Activated naive CD4-positive, alpha-beta T cell treated with anti-CD3 and anti-CD28 coated beads for 36 hours (primary cell): ENCODE measurements at regions of chr18 and their contacts with region 1.

Region 1: GRCh38 chr18:62584241-62585120 is 61.7 kb downstream of the ZCCHC2 start:
- DNase-seq: peak; percentile 93
- H3K4me3 Mint-ChIP-seq: peak overlapping the region; percentile 2
- H3K27ac Mint-ChIP-seq: peak overlapping the region; percentile 92
- H3K4me1 Mint-ChIP-seq: peaks cover 42% of the 10 kb centered on the region
- H3K27me3 Mint-ChIP-seq: no peaks in the 10 kb centered on the region

Region 2: GRCh38 chr18:61949946-61950345 is 634.5 kb before region 1 on chr18:
- CTCF ChIA-PET with region 1: no interaction called
- intact Hi-C with region 1: loop called (anchors 5 kb)
- DNase-seq: no peak
- H3K4me3 Mint-ChIP-seq: no peak overlapping the region
- H3K27ac Mint-ChIP-seq: no peak overlapping the region
- H3K4me1 Mint-ChIP-seq: peaks cover 49% of the 10 kb centered on the region
- H3K27me3 Mint-ChIP-seq: peaks cover 7% of the 10 kb centered on the region

Region 3: DNA sequence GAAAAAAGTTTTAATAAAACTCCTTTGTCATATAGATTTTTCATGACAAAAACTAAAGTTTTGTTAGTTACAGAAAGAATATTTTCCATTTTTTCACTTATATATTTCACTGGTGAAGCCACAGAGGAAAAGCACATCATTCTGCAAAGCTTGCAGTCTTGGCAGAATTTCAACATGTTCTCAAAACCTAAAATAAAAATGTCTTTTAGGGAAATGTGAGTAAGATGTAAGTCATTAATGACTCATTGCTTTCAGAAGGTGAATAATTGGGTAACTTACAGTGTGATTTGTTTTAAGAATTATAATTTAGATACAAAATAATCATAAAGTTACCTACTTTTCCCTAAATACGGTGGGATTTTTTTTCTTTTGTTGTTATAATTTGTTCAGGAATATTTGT is 302.8 kb before region 1 on chr18:
- CTCF ChIA-PET with region 1: interaction called, 7 read pairs
- intact Hi-C with region 1: loop called (anchors 1 kb)
- DNase-seq: no peak
- H3K4me3 Mint-ChIP-seq: no peak overlapping the region
- H3K27ac Mint-ChIP-seq: no peak overlapping the region
- H3K4me1 Mint-ChIP-seq: peaks cover 39% of the 10 kb centered on the region
- H3K27me3 Mint-ChIP-seq: no peaks in the 10 kb centered on the region

Region 4: GRCh38 chr18:62418258-62418657 is 166.2 kb before region 1 on chr18:
- CTCF ChIA-PET with region 1: interaction called, 10 read pairs
- intact Hi-C with region 1: loop called (anchors 1 kb)
- DNase-seq: peak; percentile 67
- H3K4me3 Mint-ChIP-seq: no peak overlapping the region
- H3K27ac Mint-ChIP-seq: peak overlapping the region; percentile 62
- H3K4me1 Mint-ChIP-seq: peaks cover 44% of the 10 kb centered on the region
- H3K27me3 Mint-ChIP-seq: peaks cover 4% of the 10 kb centered on the region

Region 5: DNA sequence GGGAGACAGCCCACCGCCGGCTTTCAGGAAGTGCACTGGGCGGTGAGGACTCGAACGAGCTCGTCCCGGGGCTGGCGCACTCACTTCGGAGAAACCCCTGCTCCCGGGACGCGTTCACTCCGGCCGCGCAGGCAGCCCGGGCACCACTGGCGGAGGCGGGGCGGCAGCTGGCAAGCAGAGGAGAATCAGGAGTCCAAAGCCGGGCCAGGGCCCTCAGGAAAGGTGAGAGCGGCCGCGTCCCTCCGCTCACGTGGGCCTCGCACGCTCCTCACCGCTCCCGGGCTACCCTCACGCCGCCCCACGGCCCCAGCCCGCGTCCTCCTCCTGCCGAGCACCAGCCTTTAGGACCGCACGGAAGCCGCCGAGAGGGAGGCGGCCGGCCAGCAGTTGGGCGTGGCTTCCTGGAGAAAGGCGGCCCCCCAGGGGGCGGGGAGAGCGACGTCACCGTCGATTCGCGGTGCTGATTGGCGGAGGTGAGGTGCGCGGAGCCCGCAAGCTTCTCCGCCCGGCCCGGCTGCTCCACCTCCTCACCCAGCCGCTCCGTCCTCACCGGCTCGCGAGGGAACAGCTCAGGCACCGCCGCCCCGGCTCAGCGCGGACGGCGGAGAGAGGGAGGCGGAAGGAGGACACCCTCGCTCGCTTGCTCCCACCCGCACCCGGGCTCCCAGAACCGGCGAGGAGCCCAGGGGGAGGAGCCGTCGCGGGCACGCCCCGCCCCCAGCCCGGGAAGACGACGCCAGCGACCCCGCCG is 61.8 kb before region 1 on chr18 and contains the start of gene ZCCHC2:
- CTCF ChIA-PET with region 1: interaction called, 6 read pairs
- intact Hi-C with region 1: loop called (anchors 1 kb)
- DNase-seq: peak; percentile 98
- H3K4me3 Mint-ChIP-seq: peak within 1 kb of the TSS; percentile 92
- H3K27ac Mint-ChIP-seq: peak within 1 kb of the TSS; percentile 98
- H3K4me1 Mint-ChIP-seq: peaks cover 14% of the 10 kb centered on the region
- H3K27me3 Mint-ChIP-seq: no peaks in the 10 kb centered on the region
- total RNA-seq, gene ZCCHC2: 22.1 to 23.3 TPM

Region 6: GRCh38 chr18:62571648-62572047 is 12.8 kb before region 1 on chr18:
- CTCF ChIA-PET with region 1: interaction called, 12 read pairs
- intact Hi-C with region 1: no loop called
- DNase-seq: no peak
- H3K4me3 Mint-ChIP-seq: no peak overlapping the region
- H3K27ac Mint-ChIP-seq: no peak overlapping the region
- H3K4me1 Mint-ChIP-seq: peaks cover 3% of the 10 kb centered on the region
- H3K27me3 Mint-ChIP-seq: no peaks in the 10 kb centered on the region

Region 7: GRCh38 chr18:62982600-62983251 is 398.2 kb after region 1 on chr18:
- CTCF ChIA-PET with region 1: interaction called, 16 read pairs
- intact Hi-C with region 1: loop called (anchors 1 kb)
- DNase-seq: peak; percentile 75
- H3K4me3 Mint-ChIP-seq: no peak overlapping the region
- H3K27ac Mint-ChIP-seq: no peak overlapping the region
- H3K4me1 Mint-ChIP-seq: no peaks in the 10 kb centered on the region
- H3K27me3 Mint-ChIP-seq: no peaks in the 10 kb centered on the region